ENCODE measurements at regions of chr7 and their contacts with region 1.

Region 1: DNA sequence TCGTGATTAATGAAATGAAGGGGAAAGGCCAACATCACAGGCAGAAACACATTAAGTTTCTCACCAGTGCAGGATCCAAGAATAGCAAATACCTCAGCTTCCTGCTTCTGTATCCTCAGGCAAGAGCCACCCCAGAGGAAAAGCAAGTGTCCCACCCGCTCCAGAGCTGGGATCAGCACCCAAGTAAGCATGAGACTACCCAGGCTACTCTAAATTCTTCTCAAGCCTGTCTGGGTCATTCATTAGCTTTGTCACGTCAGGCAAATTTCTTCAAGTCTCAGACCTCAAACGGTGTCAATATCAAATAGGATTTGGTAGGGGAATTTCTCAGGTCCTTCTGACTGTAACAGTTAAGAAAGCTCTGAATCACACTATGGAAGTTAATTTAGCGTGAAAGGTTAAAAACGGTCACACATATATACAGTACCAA is 59.0 kb downstream of the GNA12 start:
- DNase-seq: no peak

Region 2: DNA sequence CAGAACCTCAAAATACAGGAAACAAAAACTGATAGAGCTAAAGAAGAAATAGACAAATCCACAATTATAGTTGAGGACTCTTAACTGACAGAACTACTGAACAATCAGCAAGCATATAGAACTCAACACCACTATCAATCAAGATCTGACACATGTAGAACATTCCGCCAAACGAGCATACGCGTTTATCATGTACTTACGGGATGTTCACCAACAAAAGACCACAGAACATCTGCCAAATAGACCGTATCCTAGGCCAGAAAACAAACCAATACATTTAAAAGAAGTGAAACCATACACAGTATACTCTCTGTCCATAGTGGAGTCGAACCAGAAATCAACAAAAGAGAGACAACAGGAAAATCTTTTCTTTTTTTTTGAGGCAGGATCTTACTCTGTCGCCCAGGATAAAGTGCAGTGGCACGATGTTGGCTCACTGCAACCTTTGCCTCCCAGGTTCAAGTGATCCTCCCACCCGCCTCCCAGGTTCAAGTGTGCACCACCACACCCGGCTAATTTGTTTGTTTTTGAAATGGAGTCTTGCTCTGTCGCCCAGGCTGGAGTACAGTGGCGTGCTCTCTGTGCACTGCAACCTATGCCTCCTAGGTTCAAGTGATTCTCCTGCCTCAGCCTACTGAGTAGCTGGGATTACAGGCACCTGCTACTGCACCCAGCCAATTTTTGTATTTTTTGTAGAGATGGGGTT is 53.9 kb after region 1 on chr7:
- intact Hi-C with region 1: loop called in 1 of 2 experiments (anchors 10 kb)
- DNase-seq: no peak